ENCODE measurements at regions of chr14 and their contacts with region 1.

Region 1: GRCh38 chr14:33950320-33951182 is at the start of gene EGLN3:
- DNase-seq: peak; percentile 78
- H3K4me3 ChIP-seq: peak within 1 kb of the TSS; percentile 12 to 51 (median 49)
- H3K27ac ChIP-seq: no peak within 1 kb of the TSS
- H3K4me1 ChIP-seq: peaks cover 10% of the 10 kb centered on the region
- H3K27me3 ChIP-seq: peaks cover 38 to 56% of the 10 kb centered on the region in 2 experiments
- CTCF ChIP-seq: no peak
- POLR2A ChIP-seq: peak; percentile 29
- total RNA-seq, gene EGLN3: 0.14 and 0.20 TPM in 2 replicates

Region 2: DNA sequence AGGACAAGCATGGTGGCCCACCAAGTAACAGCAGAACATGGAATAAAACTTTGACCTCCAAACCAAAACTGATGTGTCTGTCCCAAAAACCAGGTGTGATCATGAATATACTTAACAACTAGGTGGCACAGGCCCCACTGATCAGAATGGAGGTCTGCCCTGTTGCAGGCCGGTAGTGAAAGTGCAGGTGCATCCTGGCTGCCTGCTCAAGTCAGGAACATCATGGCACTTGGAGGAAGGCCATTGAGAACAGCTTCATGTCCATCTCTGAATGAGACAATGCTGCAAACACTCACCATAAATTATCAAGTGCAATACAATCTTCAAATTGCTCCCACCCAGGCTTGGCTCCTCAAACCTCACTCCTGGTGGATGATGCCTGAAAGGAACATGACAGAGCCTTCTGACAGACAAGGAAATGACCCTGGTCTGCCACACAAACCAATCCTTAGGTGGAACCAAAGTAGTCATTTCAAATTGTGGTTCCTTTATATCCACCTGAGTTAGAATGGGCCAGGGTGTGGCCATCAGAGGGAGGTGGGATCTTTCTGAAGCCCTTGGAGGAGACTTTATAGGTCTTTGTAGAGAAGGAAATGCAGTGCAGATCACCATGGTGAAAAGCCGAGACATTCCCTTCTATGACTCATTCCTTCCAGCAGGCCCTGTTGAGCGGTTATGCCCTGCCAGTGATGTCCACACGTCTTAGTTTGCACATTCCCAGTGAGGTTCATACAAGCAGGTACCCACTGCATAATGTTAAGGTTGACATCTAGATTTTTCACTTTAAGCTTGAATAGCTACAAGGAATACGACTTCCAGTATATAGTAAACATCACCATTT is 35.7 kb before region 1 on chr14:
- CTCF ChIA-PET with region 1: no interaction called
- POLR2A ChIA-PET with region 1: no interaction called
- dilution Hi-C with region 1: no loop called
- intact Hi-C with region 1: loop called (anchors 2 kb)
- DNase-seq: peak; percentile 86
- H3K4me3 ChIP-seq: no peak overlapping the region
- H3K27ac ChIP-seq: no peak overlapping the region
- H3K4me1 ChIP-seq: peaks cover 27% of the 10 kb centered on the region
- H3K27me3 ChIP-seq: no peaks in the 10 kb centered on the region
- CTCF ChIP-seq: no peak
- POLR2A ChIP-seq: no peak